ENCODE measurements at regions of chr17 and their contacts with region 1.

Region 1: DNA sequence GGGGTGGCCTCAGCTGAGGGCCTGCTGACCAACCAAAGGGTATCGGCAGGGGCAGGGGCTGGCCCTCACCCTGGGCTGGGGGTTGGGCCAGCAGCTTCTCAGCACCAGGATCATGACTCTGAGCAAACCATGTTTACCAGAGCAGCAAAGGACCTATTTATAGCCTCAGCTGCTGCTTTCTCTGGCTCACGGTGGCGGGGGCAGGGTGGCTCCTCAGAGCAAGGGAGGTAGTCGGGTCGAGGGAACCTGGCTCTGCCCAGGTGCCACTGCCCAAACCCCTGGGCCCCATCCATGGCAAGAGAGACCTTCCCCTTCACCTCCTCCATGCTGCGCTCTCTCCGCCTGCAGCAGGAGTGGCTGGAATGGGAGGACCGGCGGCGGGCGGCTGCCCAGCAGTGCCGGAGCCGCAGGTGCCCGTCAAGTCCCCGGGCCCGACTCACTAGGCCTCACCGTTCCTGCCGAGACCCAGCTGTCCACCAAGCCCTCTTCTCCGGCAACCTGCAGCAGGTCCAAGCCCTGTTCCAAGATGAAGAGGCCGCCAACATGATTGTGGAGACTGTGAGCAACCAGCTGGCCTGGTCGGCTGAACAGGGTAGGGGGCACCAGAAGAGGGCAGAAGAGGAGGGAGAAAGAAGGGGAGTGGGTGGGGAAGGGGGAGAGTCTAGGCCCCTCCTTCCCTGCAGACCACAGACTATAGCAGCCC is at the start of gene ASB16:
- DNase-seq: no peak
- H3K4me3 ChIP-seq: no peak within 1 kb of the TSS
- H3K4me3 Mint-ChIP-seq: no peak within 1 kb of the TSS
- H3K27ac Mint-ChIP-seq: no peak within 1 kb of the TSS
- H3K4me1 ChIP-seq: peaks cover 18% of the 10 kb centered on the region
- H3K4me1 Mint-ChIP-seq: peaks cover 12% of the 10 kb centered on the region
- H3K27me3 ChIP-seq: no peaks in the 10 kb centered on the region
- H3K27me3 Mint-ChIP-seq: no peaks in the 10 kb centered on the region
- CTCF ChIP-seq: peak in 1 of 2 experiments; percentile 23
- total RNA-seq, gene ASB16: 0.26 TPM in 1 of 2 replicates, not detected in the other

Region 2: GRCh38 chr17:43940630-43941029 is 230.0 kb before region 1 on chr17:
- CTCF ChIA-PET with region 1: interaction called, 13 read pairs
- POLR2A ChIA-PET with region 1: no interaction called
- intact Hi-C with region 1: no loop called
- DNase-seq: peak; percentile 78 to 83
- H3K4me3 ChIP-seq: no peak overlapping the region
- H3K4me3 Mint-ChIP-seq: no peak overlapping the region
- H3K27ac Mint-ChIP-seq: no peak overlapping the region
- H3K4me1 ChIP-seq: peaks cover 15% of the 10 kb centered on the region
- H3K4me1 Mint-ChIP-seq: peaks cover 17% of the 10 kb centered on the region
- H3K27me3 ChIP-seq: no peaks in the 10 kb centered on the region
- H3K27me3 Mint-ChIP-seq: peaks cover 6% of the 10 kb centered on the region
- CTCF ChIP-seq: peak; percentile 87 to 88

Region 3: DNA sequence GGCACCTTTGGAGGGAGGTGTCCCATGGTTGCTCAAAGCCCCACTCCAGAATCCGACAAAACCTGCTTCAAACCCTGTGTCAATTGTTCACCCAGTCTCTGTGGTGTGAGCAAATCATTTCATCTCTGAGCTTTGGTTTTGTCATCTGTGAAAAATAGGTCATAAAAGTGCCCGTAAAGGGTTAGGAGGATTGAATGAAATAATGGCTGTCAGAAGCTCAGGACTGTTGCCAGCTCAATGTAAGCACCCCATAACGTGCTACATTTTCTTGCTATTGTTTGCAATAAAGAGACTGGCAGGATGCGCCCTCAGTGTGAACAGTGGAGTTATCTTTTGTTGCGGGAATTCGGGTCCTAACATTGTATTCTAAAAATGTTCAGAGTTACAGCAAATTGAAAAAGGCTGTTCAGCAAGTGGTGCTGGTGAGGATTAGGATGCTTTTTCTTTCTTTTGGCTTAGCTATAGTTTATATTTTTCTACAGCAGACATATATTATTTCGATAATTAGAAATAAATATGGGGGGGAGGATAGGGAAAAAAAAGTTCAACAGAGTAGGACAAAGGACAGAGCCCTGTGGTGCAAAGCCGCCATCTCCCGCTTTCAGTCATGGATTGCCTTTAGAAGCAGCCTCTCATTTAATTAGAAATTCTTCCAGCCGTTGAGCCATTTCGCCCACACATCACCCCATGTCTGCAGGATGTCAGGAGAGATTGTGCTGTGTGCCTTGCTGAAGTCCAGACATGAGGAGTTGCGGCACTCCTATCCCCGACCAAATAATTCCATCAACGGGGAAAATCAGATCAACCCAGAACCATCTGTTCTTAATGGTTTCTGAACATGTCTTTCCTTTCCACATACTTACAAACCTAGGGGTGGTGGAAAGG is 196.0 kb before region 1 on chr17:
- CTCF ChIA-PET with region 1: no interaction called
- POLR2A ChIA-PET with region 1: no interaction called
- intact Hi-C with region 1: no loop called
- DNase-seq: no peak
- H3K4me3 ChIP-seq: no peak overlapping the region
- H3K4me3 Mint-ChIP-seq: no peak overlapping the region
- H3K27ac Mint-ChIP-seq: no peak overlapping the region
- H3K4me1 ChIP-seq: no peaks in the 10 kb centered on the region
- H3K4me1 Mint-ChIP-seq: no peaks in the 10 kb centered on the region
- H3K27me3 ChIP-seq: peaks cover 2% of the 10 kb centered on the region
- H3K27me3 Mint-ChIP-seq: peaks cover 21% of the 10 kb centered on the region
- CTCF ChIP-seq: no peak

Region 4: GRCh38 chr17:44033861-44034408 is 136.7 kb before region 1 on chr17:
- CTCF ChIA-PET with region 1: no interaction called
- POLR2A ChIA-PET with region 1: no interaction called
- intact Hi-C with region 1: no loop called
- DNase-seq: no peak
- H3K4me3 ChIP-seq: no peak overlapping the region
- H3K4me3 Mint-ChIP-seq: no peak overlapping the region
- H3K27ac Mint-ChIP-seq: no peak overlapping the region
- H3K4me1 ChIP-seq: no peaks in the 10 kb centered on the region
- H3K4me1 Mint-ChIP-seq: no peaks in the 10 kb centered on the region
- H3K27me3 ChIP-seq: no peaks in the 10 kb centered on the region
- H3K27me3 Mint-ChIP-seq: no peaks in the 10 kb centered on the region
- CTCF ChIP-seq: no peak

Region 5: GRCh38 chr17:44084131-44084544 is 86.5 kb before region 1 on chr17:
- CTCF ChIA-PET with region 1: interaction called, 25 read pairs
- POLR2A ChIA-PET with region 1: no interaction called
- intact Hi-C with region 1: no loop called
- DNase-seq: peak in 1 of 2 experiments; percentile 49
- H3K4me3 ChIP-seq: no peak overlapping the region
- H3K4me3 Mint-ChIP-seq: no peak overlapping the region
- H3K27ac Mint-ChIP-seq: no peak overlapping the region
- H3K4me1 ChIP-seq: peaks cover 25% of the 10 kb centered on the region
- H3K4me1 Mint-ChIP-seq: peaks cover 14% of the 10 kb centered on the region
- H3K27me3 ChIP-seq: no peaks in the 10 kb centered on the region
- H3K27me3 Mint-ChIP-seq: no peaks in the 10 kb centered on the region
- CTCF ChIP-seq: peak; percentile 27 to 42

Region 6: GRCh38 chr17:44123356-44124117 is 47.1 kb before region 1 on chr17 and contains the start of gene HDAC5:
- CTCF ChIA-PET with region 1: interaction called, 19 read pairs
- POLR2A ChIA-PET with region 1: interaction called, 5 read pairs
- intact Hi-C with region 1: no loop called
- DNase-seq: peak; percentile 97
- H3K4me3 ChIP-seq: peak within 1 kb of the TSS; percentile 69
- H3K4me3 Mint-ChIP-seq: peak within 1 kb of the TSS; percentile 94
- H3K27ac Mint-ChIP-seq: peak within 1 kb of the TSS; percentile 97
- H3K4me1 ChIP-seq: peaks cover 5% of the 10 kb centered on the region; the same call in 1 of the 2 replicates
- H3K4me1 Mint-ChIP-seq: peaks cover 7% of the 10 kb centered on the region
- H3K27me3 ChIP-seq: no peaks in the 10 kb centered on the region
- H3K27me3 Mint-ChIP-seq: no peaks in the 10 kb centered on the region
- CTCF ChIP-seq: peak; percentile 67 to 92
- total RNA-seq, gene HDAC5: 25.9 and 27.0 TPM in 2 replicates

Region 7: DNA sequence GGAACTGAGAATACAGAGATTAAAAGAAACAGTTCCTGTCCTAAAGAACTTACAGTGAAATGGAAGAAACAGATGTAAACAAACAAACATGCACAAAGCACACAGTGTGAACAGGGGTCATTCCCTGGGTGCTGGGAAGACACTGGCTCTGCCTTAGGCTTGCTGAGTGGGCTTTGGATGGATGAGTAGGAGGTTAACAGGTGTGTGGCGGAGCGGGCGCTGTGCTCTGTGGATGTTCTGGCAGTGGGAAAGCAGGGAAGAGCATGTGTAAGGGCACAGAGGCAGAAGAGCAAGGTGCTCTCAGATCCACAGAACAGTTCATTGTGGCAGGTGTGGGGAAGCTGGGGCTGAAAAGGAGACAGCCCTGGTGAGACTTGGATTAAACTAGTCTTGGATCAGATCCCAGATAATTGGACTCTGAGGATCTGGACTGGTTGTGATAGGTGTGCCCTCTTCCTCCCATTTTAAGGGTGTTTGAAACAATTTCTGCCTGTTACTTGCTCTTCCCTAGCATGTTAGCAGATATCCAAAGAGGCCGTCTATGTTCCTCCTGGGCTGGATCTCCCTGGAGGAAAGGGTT is 20.8 kb before region 1 on chr17:
- CTCF ChIA-PET with region 1: interaction called, 11 read pairs
- POLR2A ChIA-PET with region 1: interaction called, 3 read pairs
- intact Hi-C with region 1: no loop called
- DNase-seq: no peak
- H3K4me3 ChIP-seq: no peak overlapping the region
- H3K4me3 Mint-ChIP-seq: no peak overlapping the region
- H3K27ac Mint-ChIP-seq: no peak overlapping the region
- H3K4me1 ChIP-seq: no peaks in the 10 kb centered on the region
- H3K4me1 Mint-ChIP-seq: no peaks in the 10 kb centered on the region
- H3K27me3 ChIP-seq: no peaks in the 10 kb centered on the region
- H3K27me3 Mint-ChIP-seq: no peaks in the 10 kb centered on the region
- CTCF ChIP-seq: no peak